ENCODE measurements at regions of chr13 and their contacts with region 1.

Region 1: GRCh38 chr13:25574437-25575411 is 202.9 kb downstream of the ATP8A2 start:
- DNase-seq: peak; percentile 79
- H3K4me3 ChIP-seq: no peak overlapping the region
- H3K27ac ChIP-seq: no peak overlapping the region
- H3K4me1 ChIP-seq: no peaks in the 10 kb centered on the region
- H3K27me3 ChIP-seq: peaks cover 0 to 2% (median 0%) of the 10 kb centered on the region in 3 donors
- CTCF ChIP-seq: peak; percentile 43 to 72 (median 58)
- EP300 ChIP-seq: no peak
- POLR2A ChIP-seq: no peak

Region 2: GRCh38 chr13:25598421-25598820 is 23.7 kb after region 1 on chr13:
- intact Hi-C with region 1: no loop called
- DNase-seq: no peak
- H3K4me3 ChIP-seq: no peak overlapping the region
- H3K27ac ChIP-seq: no peak overlapping the region
- H3K4me1 ChIP-seq: no peaks in the 10 kb centered on the region
- H3K27me3 ChIP-seq: no peaks in the 10 kb centered on the region
- CTCF ChIP-seq: no peak
- EP300 ChIP-seq: no peak
- POLR2A ChIP-seq: no peak

Region 3: DNA sequence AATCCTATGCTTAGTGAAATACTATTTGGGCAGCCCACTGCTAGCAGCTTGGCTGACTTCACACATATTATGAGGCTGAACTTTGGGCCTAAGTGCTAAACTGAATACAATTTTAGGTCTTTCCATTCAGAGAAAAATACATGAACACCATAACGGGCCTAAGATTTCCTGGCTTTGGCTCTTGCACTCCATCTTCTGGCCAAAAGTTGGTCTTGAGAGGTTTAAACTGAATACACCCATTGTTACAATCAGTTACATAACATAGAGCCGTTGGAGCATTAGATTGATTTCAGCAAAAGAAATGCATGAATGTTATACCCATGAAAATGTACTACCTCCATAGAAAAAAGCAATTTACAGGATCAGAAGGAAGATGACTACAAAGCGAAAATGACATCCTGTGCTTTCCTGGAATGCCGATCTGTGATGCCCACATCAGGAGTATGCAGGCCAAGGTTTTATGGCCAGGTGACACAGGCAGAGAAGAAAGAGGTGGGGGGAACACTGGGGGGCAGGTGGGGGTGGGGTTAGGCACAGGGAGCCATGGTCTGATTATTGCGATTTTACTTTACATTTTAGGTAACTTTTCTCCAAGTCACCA is 488.2 kb after region 1 on chr13:
- intact Hi-C with region 1: loop called (anchors 2 kb)
- DNase-seq: no peak
- H3K4me3 ChIP-seq: no peak overlapping the region
- H3K27ac ChIP-seq: no peak overlapping the region
- H3K4me1 ChIP-seq: no peaks in the 10 kb centered on the region
- H3K27me3 ChIP-seq: no peaks in the 10 kb centered on the region
- CTCF ChIP-seq: peak in 3 of 4 experiments; percentile 27 to 51 (median 35)
- EP300 ChIP-seq: no peak
- POLR2A ChIP-seq: no peak